ENCODE measurements at regions of chr2 and their contacts with region 1.

Region 1: DNA sequence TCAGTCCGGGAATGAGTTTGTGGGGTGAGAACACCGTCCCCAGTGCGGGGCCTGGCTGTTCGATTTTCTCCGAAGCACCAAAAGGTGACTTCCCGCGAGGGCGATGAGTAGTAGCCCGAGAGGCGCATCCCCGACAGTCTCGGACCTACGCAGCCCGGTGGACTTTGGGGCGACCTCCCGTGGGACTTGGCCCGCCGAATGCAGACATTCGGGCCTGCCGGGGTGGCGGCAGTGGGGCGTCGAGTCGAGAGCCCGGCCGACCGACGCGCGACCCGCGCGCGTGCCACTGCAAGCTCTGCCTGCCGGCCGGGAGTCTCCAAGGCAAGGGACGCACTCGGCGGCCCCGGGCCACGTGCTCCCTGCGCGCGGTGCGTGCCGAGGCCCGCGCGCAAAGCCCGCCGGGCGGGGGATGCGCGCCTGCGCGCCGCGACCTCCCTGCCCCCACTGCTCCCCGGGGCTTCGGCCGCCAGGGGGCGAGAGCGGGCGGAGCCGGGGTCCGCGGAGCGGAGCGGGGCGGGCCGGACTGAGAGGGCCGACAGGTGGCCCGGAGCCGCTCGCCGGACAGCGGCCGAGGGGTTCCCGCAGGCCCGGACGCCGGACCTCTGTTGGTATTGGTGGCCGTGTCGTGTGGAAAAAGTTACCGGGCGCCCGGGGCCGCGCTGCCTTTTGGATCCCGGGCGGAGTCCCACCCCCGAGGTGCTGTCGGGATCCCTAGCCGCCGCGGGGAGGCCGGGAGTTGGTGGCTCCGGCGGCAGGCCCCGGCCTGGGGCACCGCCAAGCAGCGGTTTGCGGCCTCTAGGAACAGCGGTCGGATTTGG is 1.9 kb downstream of the PTMA start:
- DNase-seq: peak; percentile 97
- H3K4me3 ChIP-seq: peak overlapping the region; percentile 74 to 96 (median 90)
- H3K27ac ChIP-seq: peak overlapping the region; percentile 94 to 100 (median 100)
- H3K4me1 ChIP-seq: peaks cover 34 to 70% (median 55%) of the 10 kb centered on the region in 6 donors
- H3K27me3 ChIP-seq: no peaks in the 10 kb centered on the region
- CTCF ChIP-seq: peak in 8 of 11 experiments; percentile 53 to 98 (median 93)
- POLR2A ChIP-seq: peak in 2 of 3 donors; percentile 70 to 72

Region 2: DNA sequence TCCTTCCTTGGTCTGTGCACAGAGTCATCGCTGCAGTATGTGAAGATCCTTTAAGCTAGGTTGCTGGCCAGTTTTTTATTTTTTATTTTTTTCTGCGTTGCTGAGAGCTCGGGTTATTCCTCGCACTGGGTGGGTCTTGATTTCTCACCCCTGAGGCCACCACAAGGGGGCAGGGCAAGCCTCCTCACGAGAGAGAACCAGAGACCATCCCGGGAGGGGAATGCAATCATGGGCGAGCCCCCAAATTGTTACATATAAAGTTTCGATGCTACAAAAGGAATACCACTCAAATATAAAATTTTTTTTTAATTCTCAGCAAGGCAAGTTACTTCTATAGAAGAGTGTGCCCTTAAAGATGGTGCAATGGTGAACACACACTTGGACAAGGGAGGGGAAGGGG is 610.3 kb before region 1 on chr2:
- intact Hi-C with region 1: no loop called
- DNase-seq: no peak
- H3K4me3 ChIP-seq: no peak overlapping the region
- H3K27ac ChIP-seq: no peak overlapping the region
- H3K4me1 ChIP-seq: peaks cover 0 to 15% (median 10%) of the 10 kb centered on the region in 6 donors
- H3K27me3 ChIP-seq: no peaks in the 10 kb centered on the region
- CTCF ChIP-seq: no peak
- POLR2A ChIP-seq: no peak

Region 3: GRCh38 chr2:231612179-231613053 is 97.8 kb before region 1 on chr2:
- intact Hi-C with region 1: loop called (anchors 5 kb)
- DNase-seq: peak; percentile 97
- H3K4me3 ChIP-seq: peak overlapping the region in 2 of 8 donors; percentile 56 to 80
- H3K27ac ChIP-seq: peak overlapping the region; percentile 86 to 97 (median 93)
- H3K4me1 ChIP-seq: peaks cover 25 to 63% (median 44%) of the 10 kb centered on the region in 6 donors
- H3K27me3 ChIP-seq: peaks cover 0 to 23% (median 0%) of the 10 kb centered on the region in 7 donors
- CTCF ChIP-seq: peak; percentile 88 to 99 (median 98)
- POLR2A ChIP-seq: no peak

Region 4: GRCh38 chr2:231662028-231662810 is 48.0 kb before region 1 on chr2:
- intact Hi-C with region 1: loop called (anchors 10 kb)
- DNase-seq: peak; percentile 99
- H3K4me3 ChIP-seq: peak overlapping the region; percentile 28 to 68 (median 45)
- H3K27ac ChIP-seq: peak overlapping the region; percentile 93 to 99 (median 96)
- H3K4me1 ChIP-seq: peaks cover 13 to 57% (median 37%) of the 10 kb centered on the region in 6 donors
- H3K27me3 ChIP-seq: no peaks in the 10 kb centered on the region
- CTCF ChIP-seq: peak in 10 of 11 experiments; percentile 10 to 67 (median 36)
- POLR2A ChIP-seq: peak in 2 of 3 donors; percentile 21 to 76

Region 5: GRCh38 chr2:231680992-231681853 is 29.0 kb before region 1 on chr2:
- intact Hi-C with region 1: loop called (anchors 2 kb)
- DNase-seq: peak; percentile 85
- H3K4me3 ChIP-seq: peak overlapping the region; percentile 16 to 71 (median 36)
- H3K27ac ChIP-seq: peak overlapping the region; percentile 60 to 87 (median 80)
- H3K4me1 ChIP-seq: peaks cover 0 to 42% (median 24%) of the 10 kb centered on the region in 6 donors
- H3K27me3 ChIP-seq: peaks cover 0 to 15% (median 0%) of the 10 kb centered on the region in 7 donors
- CTCF ChIP-seq: no peak
- POLR2A ChIP-seq: peak in 1 of 3 donors; percentile 16